ENCODE measurements at regions of chr12 and their contacts with region 1.

Region 1: GRCh38 chr12:53065975-53066931 is 12.9 kb downstream of the SPRYD3 start:
- DNase-seq: peak; percentile 84 to 92 (median 89)
- H3K4me3 ChIP-seq: no peak overlapping the region
- H3K27ac ChIP-seq: peak overlapping the region; percentile 40 to 64
- H3K4me1 ChIP-seq: peaks cover 38% of the 10 kb centered on the region
- H3K27me3 ChIP-seq: no peaks in the 10 kb centered on the region
- CTCF ChIP-seq: peak; percentile 85 to 97 (median 95)
- EP300 ChIP-seq: no peak
- POLR2A ChIP-seq: no peak

Region 2: GRCh38 chr12:52903285-52903854 is 162.9 kb before region 1 on chr12:
- intact Hi-C with region 1: no loop called
- DNase-seq: peak; percentile 60 to 80 (median 72)
- H3K4me3 ChIP-seq: peak overlapping the region; percentile 52
- H3K27ac ChIP-seq: peak overlapping the region in 1 of 2 donors; percentile 63
- H3K4me1 ChIP-seq: peaks cover 2% of the 10 kb centered on the region
- H3K27me3 ChIP-seq: no peaks in the 10 kb centered on the region
- CTCF ChIP-seq: no peak
- EP300 ChIP-seq: no peak
- POLR2A ChIP-seq: peak; percentile 53

Region 3: DNA sequence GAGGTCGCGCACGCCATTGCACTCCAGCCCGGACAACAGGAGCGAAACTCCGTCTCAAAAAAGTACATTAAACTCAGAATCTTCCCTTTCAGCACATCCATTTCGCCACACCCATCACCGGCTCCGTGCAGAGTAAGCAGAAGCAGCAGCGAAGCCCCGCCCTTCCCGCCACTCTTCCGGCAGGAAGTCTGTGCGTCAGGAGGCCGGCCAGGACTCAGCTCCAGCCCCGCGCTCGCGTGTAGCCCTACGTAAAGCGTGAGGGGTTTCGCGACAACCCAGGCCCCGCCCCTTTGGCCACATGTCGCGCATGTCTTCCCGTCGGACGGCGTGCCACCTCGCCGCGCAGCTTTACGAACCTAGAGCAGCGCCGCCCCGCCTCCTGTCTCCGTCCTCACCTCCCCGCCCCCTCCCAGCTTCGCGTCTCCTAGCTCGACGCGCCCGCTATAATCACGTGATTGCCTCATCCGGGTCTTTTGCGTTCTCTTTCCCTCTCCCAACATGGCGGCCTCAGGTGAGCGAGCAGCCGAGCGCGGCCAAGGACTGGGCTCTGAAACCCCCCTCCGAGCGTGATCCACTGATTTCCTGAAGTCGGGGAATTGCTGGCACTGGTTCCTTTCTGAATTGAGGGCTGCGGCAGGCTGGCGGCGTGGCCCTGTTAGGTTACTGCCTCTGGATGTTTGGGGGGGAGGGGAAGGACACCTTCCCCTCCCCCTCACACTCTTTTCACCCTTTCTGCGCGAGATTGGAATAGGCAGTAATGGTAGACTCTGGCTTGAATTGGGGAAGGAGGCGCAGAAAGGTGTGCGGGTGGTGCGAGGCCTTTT is 60.1 kb before region 1 on chr12 and contains the start of gene EIF4B:
- intact Hi-C with region 1: no loop called
- DNase-seq: peak; percentile 99 to 100 (median 100)
- H3K4me3 ChIP-seq: peak within 1 kb of the TSS; percentile 64
- H3K27ac ChIP-seq: peak within 1 kb of the TSS; percentile 75 to 79
- H3K4me1 ChIP-seq: peaks cover 2% of the 10 kb centered on the region
- H3K27me3 ChIP-seq: no peaks in the 10 kb centered on the region
- CTCF ChIP-seq: peak in 1 of 3 donors; percentile 13
- EP300 ChIP-seq: peak; percentile 82
- POLR2A ChIP-seq: peak; percentile 73
- total RNA-seq, gene EIF4B: 713 to 1,452 (median 896) TPM

Region 4: GRCh38 chr12:53098982-53099651 is 32.9 kb after region 1 on chr12:
- intact Hi-C with region 1: loop called (anchors 1 to 2 kb)
- DNase-seq: peak; percentile 93 to 97 (median 95)
- H3K4me3 ChIP-seq: peak overlapping the region; percentile 51
- H3K27ac ChIP-seq: peak overlapping the region; percentile 59 to 75
- H3K4me1 ChIP-seq: peaks cover 14% of the 10 kb centered on the region
- H3K27me3 ChIP-seq: no peaks in the 10 kb centered on the region
- CTCF ChIP-seq: peak; percentile 90 to 96 (median 93)
- EP300 ChIP-seq: peak; percentile 26
- POLR2A ChIP-seq: no peak

Region 5: GRCh38 chr12:53185582-53186153 is 119.4 kb after region 1 on chr12:
- intact Hi-C with region 1: loop called in 1 of 4 experiments (anchors 2 kb)
- DNase-seq: no peak
- H3K4me3 ChIP-seq: no peak overlapping the region
- H3K27ac ChIP-seq: no peak overlapping the region
- H3K4me1 ChIP-seq: peaks cover 14% of the 10 kb centered on the region
- H3K27me3 ChIP-seq: no peaks in the 10 kb centered on the region
- CTCF ChIP-seq: no peak
- EP300 ChIP-seq: no peak
- POLR2A ChIP-seq: no peak

Region 6: GRCh38 chr12:53198486-53199110 is 132.3 kb after region 1 on chr12:
- intact Hi-C with region 1: loop called in 2 of 4 experiments (anchors 5 kb)
- DNase-seq: no peak
- H3K4me3 ChIP-seq: no peak overlapping the region
- H3K27ac ChIP-seq: no peak overlapping the region
- H3K4me1 ChIP-seq: peaks cover 9% of the 10 kb centered on the region
- H3K27me3 ChIP-seq: no peaks in the 10 kb centered on the region
- CTCF ChIP-seq: no peak
- EP300 ChIP-seq: no peak
- POLR2A ChIP-seq: no peak

Measured in ovary (tissue), 10 donors.